Endothelial cell of umbilical vein (primary cell): ENCODE measurements at regions of chr12 and their contacts with region 1.

Region 1: DNA sequence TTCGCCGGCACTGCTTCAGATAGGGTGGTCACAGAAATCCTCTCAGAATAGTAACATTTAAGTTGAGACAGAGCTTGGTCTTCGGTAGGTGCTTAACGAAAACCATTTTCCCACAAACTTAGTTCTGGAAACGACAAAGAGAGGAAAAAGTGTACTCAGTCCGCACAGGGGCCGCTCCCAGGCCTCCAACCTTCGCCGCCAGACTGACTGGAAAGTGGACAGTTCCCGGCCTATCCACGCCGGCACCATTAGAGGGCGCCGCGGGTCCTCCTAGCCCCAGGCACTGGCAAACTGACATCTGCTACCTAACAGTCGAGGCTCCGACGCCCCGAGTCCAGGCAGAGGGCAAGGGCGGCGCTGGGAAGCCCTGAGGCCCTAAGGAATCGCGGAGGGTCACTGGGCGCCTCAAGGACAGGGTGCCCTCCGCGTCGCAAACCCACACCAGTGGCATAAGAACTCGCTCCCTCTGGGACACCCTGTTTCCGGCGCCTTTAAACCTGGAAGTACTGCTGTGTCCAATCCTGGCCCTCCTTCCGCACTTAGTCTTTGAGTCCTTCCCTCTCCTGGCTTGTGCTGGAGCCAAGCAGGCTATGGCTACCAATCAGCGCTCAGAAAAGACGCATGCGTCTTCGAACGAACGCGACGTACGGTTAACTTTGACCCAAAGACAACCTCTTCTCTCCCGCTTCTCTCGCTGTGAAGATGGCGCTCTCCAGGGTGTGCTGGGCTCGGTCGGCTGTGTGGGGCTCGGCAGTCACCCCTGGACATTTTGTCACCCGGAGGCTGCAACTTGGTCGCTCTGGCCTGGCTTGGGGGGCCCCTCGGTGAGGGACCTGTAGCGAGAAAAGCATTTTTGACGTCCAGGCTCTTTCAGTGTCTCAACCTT is at the start of gene LETMD1:
- DNase-seq: peak; percentile 99
- H3K4me3 ChIP-seq: peak within 1 kb of the TSS; percentile 75 to 92 (median 86)
- H3K27ac ChIP-seq: peak within 1 kb of the TSS; percentile 42
- H3K4me1 ChIP-seq: peaks cover 11% of the 10 kb centered on the region
- H3K27me3 ChIP-seq: no peaks in the 10 kb centered on the region
- CTCF ChIP-seq: peak; percentile 83 to 98
- POLR2A ChIP-seq: peak; percentile 94
- total RNA-seq, gene LETMD1: 33.8 and 38.9 TPM in 2 replicates

Region 2: GRCh38 chr12:51025836-51026638 is 21.9 kb before region 1 on chr12 and contains the start of gene SLC11A2:
- CTCF ChIA-PET with region 1: interaction called, 5 read pairs
- POLR2A ChIA-PET with region 1: no interaction called
- dilution Hi-C with region 1: no loop called
- intact Hi-C with region 1: loop called (anchors 1 kb)
- DNase-seq: peak; percentile 95
- H3K4me3 ChIP-seq: peak within 1 kb of the TSS; percentile 64 to 79 (median 78)
- H3K27ac ChIP-seq: peak within 1 kb of the TSS; percentile 90
- H3K4me1 ChIP-seq: peaks cover 17% of the 10 kb centered on the region
- H3K27me3 ChIP-seq: peaks cover 5 to 7% of the 10 kb centered on the region in 2 experiments
- CTCF ChIP-seq: peak in 1 of 2 donors; percentile 31
- POLR2A ChIP-seq: peak; percentile 73
- total RNA-seq, gene SLC11A2: 41.1 and 56.4 TPM in 2 replicates

Region 3: GRCh38 chr12:51083126-51083833 is 35.4 kb after region 1 on chr12 and contains the start of gene CSRNP2:
- CTCF ChIA-PET with region 1: no interaction called
- POLR2A ChIA-PET with region 1: interaction called, 5 read pairs
- dilution Hi-C with region 1: no loop called
- intact Hi-C with region 1: loop called (anchors 1 kb)
- DNase-seq: peak; percentile 94
- H3K4me3 ChIP-seq: peak within 1 kb of the TSS; percentile 77 to 98 (median 78)
- H3K27ac ChIP-seq: peak within 1 kb of the TSS; percentile 64
- H3K4me1 ChIP-seq: peaks cover 12% of the 10 kb centered on the region
- H3K27me3 ChIP-seq: no peaks in the 10 kb centered on the region
- CTCF ChIP-seq: peak in 1 of 2 donors; percentile 19
- POLR2A ChIP-seq: peak; percentile 100
- total RNA-seq, gene CSRNP2: 42.1 and 49.7 TPM in 2 replicates

Region 4: DNA sequence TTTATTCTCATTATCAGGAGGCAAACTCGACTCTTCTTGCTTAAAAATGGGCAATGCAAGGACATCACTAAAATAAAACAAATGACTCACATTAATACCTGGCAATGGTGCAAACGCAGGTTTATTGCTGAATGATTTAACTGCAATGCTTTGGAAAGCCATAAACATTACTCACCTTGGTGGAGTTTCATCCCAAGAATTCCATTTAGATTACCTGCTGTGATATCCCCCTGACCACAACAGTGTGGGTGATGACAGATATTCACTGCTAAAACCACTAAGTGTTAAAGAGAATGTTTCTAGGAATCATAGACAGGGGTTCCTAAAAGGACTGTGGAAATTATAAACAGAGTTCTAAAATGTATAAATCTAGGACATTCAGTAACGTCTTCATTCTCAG is 70.8 kb after region 1 on chr12:
- CTCF ChIA-PET with region 1: no interaction called
- POLR2A ChIA-PET with region 1: no interaction called
- dilution Hi-C with region 1: no loop called
- intact Hi-C with region 1: no loop called
- DNase-seq: no peak
- H3K4me3 ChIP-seq: no peak overlapping the region
- H3K27ac ChIP-seq: no peak overlapping the region
- H3K4me1 ChIP-seq: no peaks in the 10 kb centered on the region
- H3K27me3 ChIP-seq: no peaks in the 10 kb centered on the region
- CTCF ChIP-seq: no peak
- POLR2A ChIP-seq: no peak

Region 5: GRCh38 chr12:51172515-51173431 is 124.9 kb after region 1 on chr12 and contains the start of gene TFCP2:
- CTCF ChIA-PET with region 1: no interaction called
- POLR2A ChIA-PET with region 1: no interaction called
- dilution Hi-C with region 1: no loop called
- intact Hi-C with region 1: loop called (anchors 1 kb)
- DNase-seq: peak; percentile 97
- H3K4me3 ChIP-seq: peak within 1 kb of the TSS; percentile 61 to 93 (median 80)
- H3K27ac ChIP-seq: peak within 1 kb of the TSS; percentile 67
- H3K4me1 ChIP-seq: peaks cover 10% of the 10 kb centered on the region
- H3K27me3 ChIP-seq: no peaks in the 10 kb centered on the region
- CTCF ChIP-seq: no peak
- POLR2A ChIP-seq: peak; percentile 36
- total RNA-seq, gene TFCP2: 24.9 and 28.6 TPM in 2 replicates

Region 6: GRCh38 chr12:51238510-51239334 is 190.8 kb after region 1 on chr12 and contains the start of gene DAZAP2:
- CTCF ChIA-PET with region 1: no interaction called
- POLR2A ChIA-PET with region 1: no interaction called
- dilution Hi-C with region 1: no loop called
- intact Hi-C with region 1: loop called (anchors 5 kb)
- DNase-seq: peak; percentile 96
- H3K4me3 ChIP-seq: peak within 1 kb of the TSS; percentile 11 to 97 (median 66)
- H3K27ac ChIP-seq: peak within 1 kb of the TSS; percentile 85
- H3K4me1 ChIP-seq: peaks cover 12% of the 10 kb centered on the region
- H3K27me3 ChIP-seq: no peaks in the 10 kb centered on the region
- CTCF ChIP-seq: peak in 1 of 2 donors; percentile 31
- POLR2A ChIP-seq: peak; percentile 93
- total RNA-seq, gene DAZAP2: 177 TPM in 2 replicates

Region 7: GRCh38 chr12:51254592-51254991 is 206.7 kb after region 1 on chr12:
- CTCF ChIA-PET with region 1: no interaction called
- POLR2A ChIA-PET with region 1: no interaction called
- dilution Hi-C with region 1: no loop called
- intact Hi-C with region 1: loop called (anchors 5 kb)
- DNase-seq: no peak
- H3K4me3 ChIP-seq: no peak overlapping the region
- H3K27ac ChIP-seq: no peak overlapping the region
- H3K4me1 ChIP-seq: no peaks in the 10 kb centered on the region
- H3K27me3 ChIP-seq: no peaks in the 10 kb centered on the region
- CTCF ChIP-seq: no peak
- POLR2A ChIP-seq: no peak